Activated CD4-positive, alpha-beta memory T cell treated with anti-CD3 and anti-CD28 coated beads, Interleukin-2, amount 10 ng/mL, durations not matched to agents 7 days and 5 days (primary cell): ENCODE measurements at regions of chr7 and their contacts with region 1.

Region 1: DNA sequence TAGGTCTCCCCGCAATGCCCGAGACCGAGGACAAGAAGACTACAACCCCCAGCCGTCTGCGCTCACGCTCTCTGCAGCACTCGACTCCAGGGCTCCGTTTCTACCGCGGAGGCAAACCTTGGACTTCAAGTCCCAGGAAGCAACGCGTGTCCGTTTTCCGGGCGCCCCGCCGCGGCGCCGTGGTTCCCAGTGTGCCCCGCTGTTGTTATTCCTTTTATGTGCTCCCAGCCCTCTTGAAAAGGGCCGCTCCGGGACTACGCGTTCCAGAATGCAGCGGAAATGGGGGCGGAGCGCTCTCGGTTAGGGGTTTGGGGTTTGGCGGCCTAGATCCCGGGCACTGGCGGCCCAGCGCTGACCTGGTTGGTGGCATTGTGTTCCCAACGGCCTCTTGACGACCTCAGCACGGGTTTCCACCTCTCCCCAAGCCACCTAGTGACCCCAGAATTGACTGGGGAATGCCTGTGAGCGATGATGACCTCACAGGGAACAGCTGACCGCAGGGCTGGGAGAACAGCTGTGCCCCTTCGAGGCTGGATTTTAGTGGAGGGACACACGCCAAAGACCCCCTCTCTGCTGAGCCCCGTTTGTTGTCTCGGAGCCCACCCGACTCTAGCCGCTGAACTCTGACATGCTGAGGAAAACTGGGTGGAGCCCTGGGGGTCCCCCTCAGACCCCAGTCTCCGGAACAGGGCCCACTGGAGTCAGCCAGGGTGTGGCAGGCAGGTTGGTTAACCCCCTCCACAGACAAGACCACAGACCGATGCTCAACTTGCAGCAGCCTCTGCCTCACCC is 488 bp upstream of the CDK5 start:
- DNase-seq: peak; percentile 98
- H3K4me3 Mint-ChIP-seq: peak overlapping the region; percentile 84
- H3K27ac Mint-ChIP-seq: peak overlapping the region; percentile 94
- H3K4me1 Mint-ChIP-seq: peaks cover 52% of the 10 kb centered on the region
- H3K27me3 Mint-ChIP-seq: no peaks in the 10 kb centered on the region

Region 2: DNA sequence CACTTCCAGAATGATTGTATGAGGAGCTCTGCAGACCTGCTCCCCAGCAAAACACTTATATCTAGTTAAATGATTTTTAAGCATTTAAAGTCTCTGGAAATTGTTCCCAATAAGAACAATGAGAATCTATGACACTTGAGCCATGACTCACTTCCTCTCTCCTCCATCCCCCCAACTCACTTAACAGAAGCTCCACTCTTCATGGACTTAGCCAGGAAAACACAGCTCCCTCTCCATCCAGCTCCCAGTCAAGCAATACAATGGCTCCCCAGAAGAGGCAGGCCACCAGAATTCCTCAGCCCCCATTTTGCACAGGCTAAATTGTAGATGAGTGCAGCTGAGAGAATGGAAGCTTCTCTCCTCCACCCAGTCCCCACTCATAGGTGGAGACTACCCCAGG is 178.8 kb before region 1 on chr7:
- CTCF ChIA-PET with region 1: no interaction called
- POLR2A ChIA-PET with region 1: no interaction called
- DNase-seq: no peak
- H3K4me3 Mint-ChIP-seq: no peak overlapping the region
- H3K27ac Mint-ChIP-seq: no peak overlapping the region
- H3K4me1 Mint-ChIP-seq: peaks cover 3% of the 10 kb centered on the region
- H3K27me3 Mint-ChIP-seq: peaks cover 59% of the 10 kb centered on the region

Region 3: DNA sequence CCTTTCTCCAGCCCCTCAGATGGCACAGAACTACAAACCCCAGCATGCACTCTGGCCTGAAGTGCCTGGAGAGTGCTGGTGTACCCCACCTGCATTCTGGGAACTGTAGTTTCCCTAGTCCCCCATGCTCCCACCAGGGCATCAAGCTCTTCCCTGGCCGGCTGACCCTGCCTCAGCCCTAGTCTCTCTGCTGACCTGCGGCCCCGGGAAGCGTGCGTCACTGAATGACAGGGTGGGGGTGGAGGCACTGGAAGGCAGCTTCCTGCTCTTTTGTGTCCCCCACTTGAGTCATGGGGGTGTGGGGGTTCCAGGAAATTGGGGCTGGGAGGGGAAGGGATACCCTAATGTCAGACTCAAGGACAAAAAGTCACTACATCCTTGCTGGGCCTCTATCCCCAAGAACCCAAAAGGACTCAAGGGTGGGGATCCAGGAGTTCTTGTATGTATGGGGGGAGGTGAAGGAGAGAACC is 65.3 kb before region 1 on chr7:
- CTCF ChIA-PET with region 1: no interaction called
- POLR2A ChIA-PET with region 1: no interaction called
- DNase-seq: peak; percentile 37
- H3K4me3 Mint-ChIP-seq: no peak overlapping the region
- H3K27ac Mint-ChIP-seq: no peak overlapping the region
- H3K4me1 Mint-ChIP-seq: peaks cover 50% of the 10 kb centered on the region
- H3K27me3 Mint-ChIP-seq: peaks cover 13% of the 10 kb centered on the region

Region 4: DNA sequence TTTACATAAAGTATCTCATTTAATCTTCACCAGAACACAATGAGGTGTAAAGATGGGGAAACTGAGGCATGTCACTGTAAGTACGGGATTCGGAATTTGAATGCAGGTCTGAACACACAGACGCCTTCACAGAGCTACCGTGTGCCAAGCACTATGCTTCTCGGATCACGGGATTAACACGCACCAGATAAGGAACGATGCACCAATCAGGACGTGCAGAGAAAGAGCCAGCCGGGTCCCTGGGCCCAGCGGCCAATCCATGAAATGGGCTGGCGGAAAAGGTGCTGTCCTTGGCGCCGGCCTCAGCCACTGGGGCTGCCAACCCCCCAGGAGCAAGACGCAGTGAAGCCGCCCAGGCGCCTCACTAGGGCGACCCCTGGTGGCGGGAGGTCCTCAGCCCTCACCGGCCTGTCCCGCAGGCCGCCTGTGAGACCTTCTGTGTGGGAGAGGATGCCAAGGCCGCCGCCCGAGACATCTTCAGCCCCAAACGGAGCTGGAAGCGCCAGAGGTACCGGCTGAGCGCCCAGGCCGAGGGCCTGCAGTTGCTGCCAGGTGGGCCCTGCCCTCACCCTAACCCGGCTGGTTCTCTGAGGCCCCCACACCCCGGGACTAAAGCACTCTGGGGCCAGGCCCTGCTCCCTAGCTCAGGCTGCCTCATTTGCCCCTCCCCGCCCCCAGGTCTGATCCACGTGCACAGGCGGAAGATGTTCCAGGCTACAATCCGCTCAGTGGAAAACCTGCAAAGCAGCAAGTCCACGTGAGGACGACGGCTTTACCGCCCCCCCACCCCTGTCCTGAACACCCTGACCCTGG is 49.5 kb before region 1 on chr7:
- CTCF ChIA-PET with region 1: interaction called, 10 read pairs
- POLR2A ChIA-PET with region 1: interaction called, 8 read pairs
- DNase-seq: peak; percentile 79
- H3K4me3 Mint-ChIP-seq: peak overlapping the region; percentile 76
- H3K27ac Mint-ChIP-seq: peak overlapping the region; percentile 92
- H3K4me1 Mint-ChIP-seq: peaks cover 67% of the 10 kb centered on the region
- H3K27me3 Mint-ChIP-seq: peaks cover 2% of the 10 kb centered on the region

Region 5: DNA sequence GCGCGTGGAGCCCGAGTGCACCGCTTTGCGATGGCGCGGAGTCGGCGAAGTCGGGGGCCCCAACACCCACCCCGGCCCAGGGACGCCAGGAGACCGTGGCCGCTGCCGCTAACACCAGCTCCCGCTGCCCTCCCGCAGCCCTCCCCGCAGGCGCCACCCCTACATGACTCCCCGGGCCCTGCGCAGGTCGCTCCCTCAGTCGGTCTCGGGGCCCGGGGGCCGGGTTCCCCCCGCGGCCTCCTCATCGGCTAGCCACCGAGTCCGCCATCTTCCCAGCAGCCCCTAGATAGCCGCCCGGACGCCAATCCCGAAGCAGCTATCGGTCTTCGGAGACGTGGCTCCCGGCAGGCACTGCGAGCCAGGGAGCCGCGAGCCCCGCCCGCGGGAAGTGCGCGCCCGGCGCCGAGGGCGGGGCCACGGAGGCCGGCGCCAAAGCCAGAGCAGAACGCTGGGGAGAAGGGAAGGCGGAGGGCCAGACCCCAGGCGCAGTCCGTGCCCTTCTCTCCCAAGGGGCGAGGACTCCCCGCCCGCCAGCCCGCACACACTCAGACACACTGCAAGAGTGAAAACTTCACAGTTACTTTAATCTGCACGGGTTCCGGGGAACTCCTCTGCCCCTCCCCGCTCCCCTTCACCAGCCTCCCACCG is 22.5 kb after region 1 on chr7 and contains the start of gene FASTK:
- CTCF ChIA-PET with region 1: interaction called, 5 read pairs
- POLR2A ChIA-PET with region 1: interaction called, 13 read pairs
- DNase-seq: peak; percentile 90
- H3K4me3 Mint-ChIP-seq: peak within 1 kb of the TSS; percentile 88
- H3K27ac Mint-ChIP-seq: peak within 1 kb of the TSS; percentile 74
- H3K4me1 Mint-ChIP-seq: peaks cover 43% of the 10 kb centered on the region
- H3K27me3 Mint-ChIP-seq: peaks cover 9% of the 10 kb centered on the region
- total RNA-seq, gene FASTK: 70.0 to 72.7 TPM